Upper lobe of right lung (tissue), 1 donor: ENCODE measurements at regions of chr2 and their contacts with region 1.

Region 1: GRCh38 chr2:68709421-68709911 is 25.1 kb upstream of the ARHGAP25 start:
- DNase-seq: no peak
- ATAC-seq: peak; percentile 80
- H3K4me3 ChIP-seq: no peak overlapping the region
- H3K27ac ChIP-seq: no peak overlapping the region
- H3K4me1 ChIP-seq: no peaks in the 10 kb centered on the region
- H3K27me3 ChIP-seq: no peaks in the 10 kb centered on the region
- CTCF ChIP-seq: peak; percentile 72

Region 2: GRCh38 chr2:68548396-68548795 is 161.1 kb before region 1 on chr2:
- intact Hi-C with region 1: no loop called
- DNase-seq: no peak
- ATAC-seq: no peak
- H3K4me3 ChIP-seq: no peak overlapping the region
- H3K27ac ChIP-seq: no peak overlapping the region
- H3K4me1 ChIP-seq: no peaks in the 10 kb centered on the region
- H3K27me3 ChIP-seq: no peaks in the 10 kb centered on the region
- CTCF ChIP-seq: no peak

Region 3: GRCh38 chr2:68774569-68775271 is 65.3 kb after region 1 on chr2:
- intact Hi-C with region 1: no loop called
- DNase-seq: peak; percentile 85
- ATAC-seq: peak; percentile 89
- H3K4me3 ChIP-seq: peak overlapping the region; percentile 46
- H3K27ac ChIP-seq: peak overlapping the region; percentile 79
- H3K4me1 ChIP-seq: peaks cover 43% of the 10 kb centered on the region
- H3K27me3 ChIP-seq: no peaks in the 10 kb centered on the region
- CTCF ChIP-seq: no peak

Region 4: GRCh38 chr2:68925295-68925896 is 215.9 kb after region 1 on chr2:
- intact Hi-C with region 1: loop called (anchors 10 kb)
- DNase-seq: no peak
- ATAC-seq: peak; percentile 86
- H3K4me3 ChIP-seq: no peak overlapping the region
- H3K27ac ChIP-seq: no peak overlapping the region
- H3K4me1 ChIP-seq: no peaks in the 10 kb centered on the region
- H3K27me3 ChIP-seq: no peaks in the 10 kb centered on the region
- CTCF ChIP-seq: peak; percentile 88